ENCODE measurements at regions of chr7 and their contacts with region 1.

Region 1: DNA sequence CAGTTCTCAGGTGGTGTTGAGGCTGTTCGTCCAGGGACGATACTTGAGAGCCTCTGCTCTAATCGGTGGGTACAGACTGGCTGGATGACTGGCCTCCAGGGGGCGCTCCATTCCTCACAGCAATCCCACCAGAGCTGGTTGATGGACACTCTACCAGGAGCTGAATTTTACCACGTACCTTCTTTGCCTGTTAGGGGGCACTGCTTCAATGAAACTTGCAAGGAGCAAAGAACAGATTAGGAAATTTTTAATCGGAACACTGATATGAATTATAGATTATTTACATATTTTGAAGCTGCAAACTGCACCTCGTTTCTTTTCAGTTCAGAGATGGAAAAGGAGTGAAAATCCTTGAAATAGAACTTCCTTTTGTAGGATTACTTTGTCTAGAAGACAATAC is 44.9 kb downstream of the KBTBD2 start:
- DNase-seq: peak; percentile 79
- H3K4me3 ChIP-seq: no peak overlapping the region
- H3K27ac ChIP-seq: no peak overlapping the region
- H3K4me1 ChIP-seq: no peaks in the 10 kb centered on the region
- H3K27me3 ChIP-seq: no peaks in the 10 kb centered on the region
- CTCF ChIP-seq: peak; percentile 73 to 88
- POLR2A ChIP-seq: no peak

Region 2: DNA sequence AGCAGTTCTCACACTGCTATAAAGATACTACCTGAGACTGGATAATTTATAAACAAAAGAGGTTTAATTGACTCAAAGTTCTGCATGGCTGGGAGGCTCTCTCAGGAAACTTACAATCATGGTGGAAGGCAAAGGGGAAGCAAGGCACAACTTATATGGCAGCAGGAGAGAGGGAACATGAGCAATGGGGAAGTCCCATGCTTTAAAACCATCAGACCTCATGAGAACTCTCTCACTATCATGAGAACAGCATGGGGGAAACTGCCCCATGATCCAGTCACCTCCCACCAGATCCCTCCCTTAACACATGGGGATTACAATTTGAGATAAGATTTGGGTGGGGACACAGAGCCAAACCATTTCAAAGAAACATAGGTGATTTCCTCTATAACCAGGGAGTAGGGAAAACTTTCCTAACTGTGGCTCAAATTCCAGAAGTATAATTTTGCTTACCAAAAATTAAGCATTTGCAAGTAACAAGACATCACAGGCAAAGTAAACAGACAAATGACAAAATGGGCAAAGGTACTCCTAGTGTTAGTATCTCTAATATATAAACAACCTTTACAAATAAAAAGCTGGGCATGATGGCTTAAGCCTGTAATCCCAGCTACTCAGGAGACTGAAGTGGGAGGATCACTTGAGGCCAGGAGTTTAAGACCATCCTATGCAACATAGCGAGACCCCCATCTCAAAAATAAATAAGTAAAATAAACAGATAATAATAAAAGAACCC is 43.1 kb before region 1 on chr7:
- CTCF ChIA-PET with region 1: interaction called, 11 read pairs
- POLR2A ChIA-PET with region 1: no interaction called
- dilution Hi-C with region 1: no loop called
- intact Hi-C with region 1: no loop called
- DNase-seq: no peak
- H3K4me3 ChIP-seq: no peak overlapping the region
- H3K27ac ChIP-seq: no peak overlapping the region
- H3K4me1 ChIP-seq: no peaks in the 10 kb centered on the region
- H3K27me3 ChIP-seq: no peaks in the 10 kb centered on the region
- CTCF ChIP-seq: no peak
- POLR2A ChIP-seq: no peak

Region 3: GRCh38 chr7:32865448-32866030 is 18.8 kb after region 1 on chr7:
- CTCF ChIA-PET with region 1: interaction called, 28 read pairs
- POLR2A ChIA-PET with region 1: no interaction called
- dilution Hi-C with region 1: no loop called
- intact Hi-C with region 1: no loop called
- DNase-seq: no peak
- H3K4me3 ChIP-seq: no peak overlapping the region
- H3K27ac ChIP-seq: no peak overlapping the region
- H3K4me1 ChIP-seq: no peaks in the 10 kb centered on the region
- H3K27me3 ChIP-seq: no peaks in the 10 kb centered on the region
- CTCF ChIP-seq: no peak
- POLR2A ChIP-seq: no peak

Region 4: DNA sequence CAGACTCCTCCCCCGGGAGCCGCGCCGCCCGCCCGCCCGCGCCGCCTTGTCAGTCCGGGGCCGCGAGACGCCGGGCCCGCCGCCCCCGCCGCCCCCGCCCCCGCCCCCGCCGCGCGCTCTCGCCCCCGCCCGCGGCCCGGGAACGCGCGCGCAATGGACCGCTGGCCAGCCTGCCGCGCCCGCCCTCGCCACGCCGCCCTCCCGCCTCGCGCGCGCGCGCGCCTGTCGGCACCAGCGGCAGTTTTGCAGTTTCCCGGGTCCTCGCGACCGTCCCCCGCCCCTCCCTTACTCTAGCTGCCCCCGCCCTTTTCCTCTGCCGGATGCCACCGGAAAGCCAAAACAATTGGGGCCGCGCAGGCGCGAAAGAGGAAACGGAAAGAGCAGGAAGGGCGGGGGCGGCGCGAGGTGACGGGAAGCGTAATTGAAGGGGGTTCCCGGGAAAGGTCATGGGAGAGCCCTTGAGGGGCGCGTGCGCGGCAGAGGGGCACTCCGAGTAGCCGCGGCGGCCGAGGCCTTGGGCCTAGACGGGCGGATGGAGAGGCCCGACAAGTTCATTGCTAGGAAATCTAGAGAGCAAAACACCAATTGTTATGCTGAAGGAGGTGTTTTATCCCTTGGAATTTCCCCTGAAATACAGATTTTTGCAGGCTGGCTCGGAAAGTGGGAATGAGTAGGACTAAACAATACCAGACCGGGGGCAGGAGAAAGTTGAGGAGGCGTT is 45.3 kb after region 1 on chr7:
- CTCF ChIA-PET with region 1: interaction called, 39 read pairs
- POLR2A ChIA-PET with region 1: no interaction called
- dilution Hi-C with region 1: no loop called
- intact Hi-C with region 1: no loop called
- DNase-seq: peak; percentile 96
- H3K4me3 ChIP-seq: peak overlapping the region in 2 of 3 experiments; percentile 68 to 90
- H3K27ac ChIP-seq: peak overlapping the region; percentile 99
- H3K4me1 ChIP-seq: peaks cover 46% of the 10 kb centered on the region
- H3K27me3 ChIP-seq: no peaks in the 10 kb centered on the region
- CTCF ChIP-seq: no peak
- POLR2A ChIP-seq: no peak

Region 5: GRCh38 chr7:32942786-32943653 is 96.3 kb after region 1 on chr7:
- CTCF ChIA-PET with region 1: interaction called, 31 read pairs
- POLR2A ChIA-PET with region 1: no interaction called
- dilution Hi-C with region 1: no loop called
- intact Hi-C with region 1: loop called (anchors 1 kb)
- DNase-seq: peak; percentile 78
- H3K4me3 ChIP-seq: peak overlapping the region; percentile 84 to 93 (median 92)
- H3K27ac ChIP-seq: peak overlapping the region; percentile 73
- H3K4me1 ChIP-seq: peaks cover 10% of the 10 kb centered on the region
- H3K27me3 ChIP-seq: no peaks in the 10 kb centered on the region
- CTCF ChIP-seq: peak; percentile 59 to 66
- POLR2A ChIP-seq: peak; percentile 7

Region 6: DNA sequence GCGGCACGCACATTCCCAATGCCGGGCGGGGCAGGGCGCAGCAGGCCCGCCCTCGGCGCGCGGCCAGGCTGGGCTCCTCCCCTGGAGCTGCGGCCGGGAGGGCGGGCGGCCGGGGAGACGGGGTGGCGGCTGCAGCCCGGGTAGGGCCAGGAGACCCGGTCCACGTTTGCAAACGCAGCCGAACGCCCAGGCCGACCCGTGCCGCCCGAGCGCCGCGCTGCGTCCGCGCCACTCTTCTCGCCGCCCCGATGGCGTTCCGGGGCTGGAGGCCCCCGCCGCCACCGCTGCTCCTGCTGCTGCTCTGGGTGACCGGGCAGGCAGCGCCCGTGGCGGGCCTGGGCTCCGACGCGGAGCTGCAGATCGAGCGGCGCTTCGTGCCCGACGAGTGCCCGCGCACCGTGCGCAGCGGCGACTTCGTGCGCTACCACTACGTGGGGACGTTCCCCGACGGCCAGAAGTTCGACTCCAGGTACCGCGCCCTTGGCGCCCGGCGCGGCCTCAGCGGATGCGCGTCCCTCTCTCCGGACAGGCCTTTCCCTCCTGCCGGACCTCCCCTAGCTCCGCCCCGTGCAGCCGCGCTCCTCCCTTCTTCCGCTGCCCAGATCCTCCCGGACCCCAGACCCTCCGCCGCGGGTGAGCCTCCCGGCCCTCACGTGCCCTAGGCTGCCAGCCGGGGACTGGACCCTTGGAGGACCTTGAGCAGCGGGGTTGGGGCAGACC is 110.8 kb after region 1 on chr7 and contains the start of gene FKBP9:
- CTCF ChIA-PET with region 1: interaction called, 5 read pairs
- POLR2A ChIA-PET with region 1: no interaction called
- dilution Hi-C with region 1: no loop called
- intact Hi-C with region 1: loop called (anchors 2 kb)
- DNase-seq: peak; percentile 82
- H3K4me3 ChIP-seq: peak within 1 kb of the TSS; percentile 50 to 89 (median 73)
- H3K27ac ChIP-seq: peak within 1 kb of the TSS; percentile 78
- H3K4me1 ChIP-seq: peaks cover 10% of the 10 kb centered on the region
- H3K27me3 ChIP-seq: no peaks in the 10 kb centered on the region
- CTCF ChIP-seq: no peak
- POLR2A ChIP-seq: peak; percentile 92
- total RNA-seq, gene FKBP9: 112 and 124 TPM in 2 replicates

Region 7: GRCh38 chr7:33310541-33310940 is 463.8 kb after region 1 on chr7:
- CTCF ChIA-PET with region 1: no interaction called
- POLR2A ChIA-PET with region 1: no interaction called
- dilution Hi-C with region 1: no loop called
- intact Hi-C with region 1: no loop called
- DNase-seq: no peak
- H3K4me3 ChIP-seq: no peak overlapping the region
- H3K27ac ChIP-seq: no peak overlapping the region
- H3K4me1 ChIP-seq: no peaks in the 10 kb centered on the region
- H3K27me3 ChIP-seq: no peaks in the 10 kb centered on the region
- CTCF ChIP-seq: no peak
- POLR2A ChIP-seq: no peak